ENCODE measurements at regions of chr13 and their contacts with region 1.

Region 1: GRCh38 chr13:29850224-29850898 is at the start of gene UBL3:
- DNase-seq: peak; percentile 96 to 97
- ATAC-seq: peak; percentile 95 to 99 (median 98)
- H3K4me3 ChIP-seq: peak within 1 kb of the TSS; percentile 62 to 98 (median 92)
- H3K27ac ChIP-seq: peak within 1 kb of the TSS; percentile 94 to 99 (median 98)
- H3K4me1 ChIP-seq: peaks cover 0 to 40% (median 19%) of the 10 kb centered on the region in 9 donors
- H3K27me3 ChIP-seq: no peaks in the 10 kb centered on the region
- CTCF ChIP-seq: no peak
- total RNA-seq, gene UBL3: 18.3 to 24.3 (median 21.0) TPM

Region 2: GRCh38 chr13:29771247-29771646 is 79.1 kb before region 1 on chr13:
- intact Hi-C with region 1: loop called in 6 of 10 experiments (anchors 5 to 10 kb)
- DNase-seq: no peak
- ATAC-seq: no peak
- H3K4me3 ChIP-seq: no peak overlapping the region
- H3K27ac ChIP-seq: no peak overlapping the region
- H3K4me1 ChIP-seq: no peaks in the 10 kb centered on the region
- H3K27me3 ChIP-seq: no peaks in the 10 kb centered on the region
- CTCF ChIP-seq: peak; percentile 17 to 70 (median 59)

Measured in heart right ventricle (tissue), 16 donors.